Ovary (tissue), 10 donors: ENCODE measurements at regions of chr3 and their contacts with region 1.

Region 1: GRCh38 chr3:30693470-30694120 is 87.2 kb downstream of the TGFBR2 start:
- DNase-seq: peak in 1 of 5 donors; percentile 48
- H3K4me3 ChIP-seq: no peak overlapping the region
- H3K27ac ChIP-seq: no peak overlapping the region
- H3K4me1 ChIP-seq: peaks cover 9% of the 10 kb centered on the region
- H3K27me3 ChIP-seq: no peaks in the 10 kb centered on the region
- CTCF ChIP-seq: peak; percentile 60 to 70 (median 64)
- EP300 ChIP-seq: no peak
- POLR2A ChIP-seq: no peak

Region 2: GRCh38 chr3:30042274-30042859 is 651.2 kb before region 1 on chr3:
- intact Hi-C with region 1: loop called in 2 of 4 experiments (anchors 5 to 10 kb)
- DNase-seq: peak; percentile 24 to 68 (median 38)
- H3K4me3 ChIP-seq: no peak overlapping the region
- H3K27ac ChIP-seq: no peak overlapping the region
- H3K4me1 ChIP-seq: no peaks in the 10 kb centered on the region
- H3K27me3 ChIP-seq: no peaks in the 10 kb centered on the region
- CTCF ChIP-seq: peak in 2 of 3 donors; percentile 59 to 78
- EP300 ChIP-seq: no peak
- POLR2A ChIP-seq: no peak

Region 3: GRCh38 chr3:30112902-30113484 is 580.6 kb before region 1 on chr3:
- intact Hi-C with region 1: loop called in 1 of 4 experiments (anchors 5 kb)
- DNase-seq: no peak
- H3K4me3 ChIP-seq: no peak overlapping the region
- H3K27ac ChIP-seq: no peak overlapping the region
- H3K4me1 ChIP-seq: no peaks in the 10 kb centered on the region
- H3K27me3 ChIP-seq: no peaks in the 10 kb centered on the region
- CTCF ChIP-seq: peak in 2 of 3 donors; percentile 10 to 53
- EP300 ChIP-seq: no peak
- POLR2A ChIP-seq: no peak

Region 4: GRCh38 chr3:30199096-30199759 is 494.4 kb before region 1 on chr3:
- intact Hi-C with region 1: loop called in 1 of 4 experiments (anchors 10 kb)
- DNase-seq: peak; percentile 35 to 76 (median 72)
- H3K4me3 ChIP-seq: no peak overlapping the region
- H3K27ac ChIP-seq: no peak overlapping the region
- H3K4me1 ChIP-seq: no peaks in the 10 kb centered on the region
- H3K27me3 ChIP-seq: no peaks in the 10 kb centered on the region
- CTCF ChIP-seq: peak; percentile 59 to 79 (median 65)
- EP300 ChIP-seq: no peak
- POLR2A ChIP-seq: no peak

Region 5: GRCh38 chr3:30426293-30426993 is 267.2 kb before region 1 on chr3:
- intact Hi-C with region 1: no loop called
- DNase-seq: peak; percentile 19 to 68 (median 57)
- H3K4me3 ChIP-seq: no peak overlapping the region
- H3K27ac ChIP-seq: no peak overlapping the region
- H3K4me1 ChIP-seq: peaks cover 1% of the 10 kb centered on the region
- H3K27me3 ChIP-seq: no peaks in the 10 kb centered on the region
- CTCF ChIP-seq: no peak
- EP300 ChIP-seq: no peak
- POLR2A ChIP-seq: no peak

Region 6: DNA sequence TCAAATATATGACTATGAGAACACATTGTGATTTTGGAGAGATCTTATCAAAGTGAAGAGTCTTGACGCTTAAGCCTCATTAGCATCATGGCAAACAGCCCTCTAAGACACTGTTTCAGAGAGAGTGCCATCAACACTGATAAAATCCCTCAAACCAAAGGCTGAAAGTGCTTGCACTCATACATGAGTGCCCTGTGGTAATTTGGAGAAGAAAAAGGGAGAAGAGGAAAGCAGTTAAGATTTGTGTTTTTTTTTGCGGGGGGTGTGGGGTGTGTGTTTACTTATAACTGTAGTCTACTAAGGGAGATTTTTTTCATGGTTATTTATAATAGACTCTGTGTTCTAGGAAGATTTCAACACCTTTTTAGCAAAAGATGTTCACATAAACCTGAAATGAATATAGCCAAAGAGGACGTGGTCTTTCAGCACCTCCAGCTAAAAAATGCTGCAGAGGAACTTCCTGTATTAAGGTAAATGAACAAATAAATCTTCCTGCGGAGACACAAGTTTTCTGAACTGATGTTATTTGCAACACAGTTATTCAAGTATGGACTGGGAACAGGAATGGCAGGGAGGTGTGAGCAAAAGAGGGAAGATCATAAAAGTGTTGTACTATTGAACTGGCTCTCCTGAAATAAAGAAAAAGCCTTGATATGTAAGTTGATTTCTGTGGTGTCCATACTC is 169.1 kb before region 1 on chr3:
- intact Hi-C with region 1: loop called in 1 of 4 experiments (anchors 10 kb)
- DNase-seq: no peak
- H3K4me3 ChIP-seq: no peak overlapping the region
- H3K27ac ChIP-seq: no peak overlapping the region
- H3K4me1 ChIP-seq: no peaks in the 10 kb centered on the region
- H3K27me3 ChIP-seq: no peaks in the 10 kb centered on the region
- CTCF ChIP-seq: no peak
- EP300 ChIP-seq: no peak
- POLR2A ChIP-seq: no peak

Region 7: DNA sequence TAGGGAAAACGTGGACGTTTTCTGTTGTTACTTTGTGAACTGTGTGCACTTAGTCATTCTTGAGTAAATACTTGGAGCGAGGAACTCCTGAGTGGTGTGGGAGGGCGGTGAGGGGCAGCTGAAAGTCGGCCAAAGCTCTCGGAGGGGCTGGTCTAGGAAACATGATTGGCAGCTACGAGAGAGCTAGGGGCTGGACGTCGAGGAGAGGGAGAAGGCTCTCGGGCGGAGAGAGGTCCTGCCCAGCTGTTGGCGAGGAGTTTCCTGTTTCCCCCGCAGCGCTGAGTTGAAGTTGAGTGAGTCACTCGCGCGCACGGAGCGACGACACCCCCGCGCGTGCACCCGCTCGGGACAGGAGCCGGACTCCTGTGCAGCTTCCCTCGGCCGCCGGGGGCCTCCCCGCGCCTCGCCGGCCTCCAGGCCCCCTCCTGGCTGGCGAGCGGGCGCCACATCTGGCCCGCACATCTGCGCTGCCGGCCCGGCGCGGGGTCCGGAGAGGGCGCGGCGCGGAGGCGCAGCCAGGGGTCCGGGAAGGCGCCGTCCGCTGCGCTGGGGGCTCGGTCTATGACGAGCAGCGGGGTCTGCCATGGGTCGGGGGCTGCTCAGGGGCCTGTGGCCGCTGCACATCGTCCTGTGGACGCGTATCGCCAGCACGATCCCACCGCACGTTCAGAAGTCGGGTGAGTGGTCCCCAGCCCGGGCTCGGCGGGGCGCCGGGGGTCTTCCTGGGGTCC is 87.1 kb before region 1 on chr3 and contains the start of gene TGFBR2:
- intact Hi-C with region 1: loop called in 2 of 4 experiments (anchors 10 kb)
- DNase-seq: peak; percentile 89 to 94 (median 91)
- H3K4me3 ChIP-seq: peak within 1 kb of the TSS; percentile 83
- H3K27ac ChIP-seq: peak within 1 kb of the TSS; percentile 86 to 92
- H3K4me1 ChIP-seq: no peaks in the 10 kb centered on the region
- H3K27me3 ChIP-seq: no peaks in the 10 kb centered on the region
- CTCF ChIP-seq: peak in 2 of 3 donors; percentile 38 to 69
- EP300 ChIP-seq: no peak
- POLR2A ChIP-seq: peak; percentile 76
- total RNA-seq, gene TGFBR2: 26.8 to 62.8 (median 53.8) TPM

Region 8: GRCh38 chr3:30623351-30623750 is 70.2 kb before region 1 on chr3:
- intact Hi-C with region 1: no loop called
- DNase-seq: no peak
- H3K4me3 ChIP-seq: no peak overlapping the region
- H3K27ac ChIP-seq: no peak overlapping the region
- H3K4me1 ChIP-seq: peaks cover 8% of the 10 kb centered on the region
- H3K27me3 ChIP-seq: no peaks in the 10 kb centered on the region
- CTCF ChIP-seq: no peak
- EP300 ChIP-seq: no peak
- POLR2A ChIP-seq: no peak

Region 9: GRCh38 chr3:30711151-30711550 is 17.6 kb after region 1 on chr3:
- intact Hi-C with region 1: no loop called
- DNase-seq: no peak
- H3K4me3 ChIP-seq: no peak overlapping the region
- H3K27ac ChIP-seq: no peak overlapping the region
- H3K4me1 ChIP-seq: no peaks in the 10 kb centered on the region
- H3K27me3 ChIP-seq: no peaks in the 10 kb centered on the region
- CTCF ChIP-seq: no peak
- EP300 ChIP-seq: no peak
- POLR2A ChIP-seq: no peak